HepG2 (cell line): ENCODE measurements at regions of chr12 and their contacts with region 1.

Region 1: GRCh38 chr12:32541851-32542258 is 137.2 kb upstream of the DNM1L start:
- DNase-seq: peak; percentile 29
- ATAC-seq: peak; percentile 18; the same call in 2 of the 3 replicates
- H3K4me3 ChIP-seq: peak overlapping the region; percentile 26 to 49 (median 43); a peak in 3 of 6 replicates
- H3K27ac ChIP-seq: peak overlapping the region; percentile 76
- H3K4me1 ChIP-seq: peaks cover 89% of the 10 kb centered on the region
- H3K27me3 ChIP-seq: no peaks in the 10 kb centered on the region
- CTCF ChIP-seq: no peak
- EP300 ChIP-seq: no peak
- POLR2A ChIP-seq: no peak
- RAD21 ChIP-seq: no peak

Region 2: GRCh38 chr12:32574585-32574984 is 32.7 kb after region 1 on chr12:
- CTCF ChIA-PET with region 1: no interaction called
- POLR2A ChIA-PET with region 1: no interaction called
- in situ Hi-C with region 1: no loop called
- intact Hi-C with region 1: no loop called
- DNase-seq: no peak
- ATAC-seq: no peak
- H3K4me3 ChIP-seq: no peak overlapping the region
- H3K27ac ChIP-seq: no peak overlapping the region
- H3K4me1 ChIP-seq: no peaks in the 10 kb centered on the region
- H3K27me3 ChIP-seq: no peaks in the 10 kb centered on the region
- CTCF ChIP-seq: no peak
- EP300 ChIP-seq: no peak
- POLR2A ChIP-seq: no peak
- RAD21 ChIP-seq: no peak

Region 3: GRCh38 chr12:32679091-32679919 is 137.4 kb after region 1 on chr12 and contains the start of gene DNM1L:
- CTCF ChIA-PET with region 1: no interaction called
- POLR2A ChIA-PET with region 1: no interaction called
- in situ Hi-C with region 1: no loop called
- intact Hi-C with region 1: loop called (anchors 5 kb)
- DNase-seq: peak; percentile 93
- ATAC-seq: peak; percentile 96
- H3K4me3 ChIP-seq: peak within 1 kb of the TSS; percentile 84 to 85 (median 84)
- H3K27ac ChIP-seq: peak within 1 kb of the TSS; percentile 92
- H3K4me1 ChIP-seq: peaks cover 64% of the 10 kb centered on the region
- H3K27me3 ChIP-seq: no peaks in the 10 kb centered on the region; a peak in 1 of 5 replicates
- CTCF ChIP-seq: 0 out of 2 replicates have a peak, but pooled peaks have one; percentile 2
- EP300 ChIP-seq: peak in 1 of 2 experiments; percentile 13; a peak in 1 of 4 replicates
- POLR2A ChIP-seq: peak; percentile 89 to 97
- RAD21 ChIP-seq: peak; percentile 33; the same call in 1 of the 2 replicates
- total RNA-seq, gene DNM1L: 65.8 and 81.5 TPM in 2 replicates

Region 4: DNA sequence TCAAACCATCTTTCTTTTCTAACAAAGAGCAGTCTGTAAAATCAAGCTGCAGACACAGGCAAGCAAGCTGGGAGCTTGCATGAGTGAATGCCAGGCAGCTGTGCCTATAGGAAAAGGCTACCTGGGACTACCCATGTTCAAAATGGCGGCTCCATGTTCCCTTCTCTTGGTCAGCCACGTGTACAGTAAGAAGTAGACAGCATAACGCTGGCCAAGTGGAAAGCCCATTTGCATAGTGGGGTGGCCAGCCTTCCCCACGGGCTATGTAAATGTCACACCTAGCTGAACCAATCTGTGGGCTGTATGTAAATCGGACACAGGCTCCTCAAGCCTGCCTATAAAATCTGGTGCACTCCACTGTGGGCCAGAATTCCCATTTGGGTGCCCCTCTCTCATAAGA is 780.7 kb after region 1 on chr12:
- CTCF ChIA-PET with region 1: no interaction called
- POLR2A ChIA-PET with region 1: no interaction called
- in situ Hi-C with region 1: no loop called
- intact Hi-C with region 1: no loop called
- DNase-seq: no peak
- ATAC-seq: no peak; the same call in 2 of the 3 replicates
- H3K4me3 ChIP-seq: no peak overlapping the region
- H3K27ac ChIP-seq: no peak overlapping the region
- H3K4me1 ChIP-seq: no peaks in the 10 kb centered on the region
- H3K27me3 ChIP-seq: no peaks in the 10 kb centered on the region
- CTCF ChIP-seq: no peak
- EP300 ChIP-seq: no peak
- POLR2A ChIP-seq: no peak
- RAD21 ChIP-seq: no peak